Common myeloid progenitor, CD34-positive (primary cell): ENCODE measurements at regions of chr11 and their contacts with region 1.

Region 1: GRCh38 chr11:2532704-2533586 is 88.1 kb downstream of the KCNQ1 start:
- DNase-seq: peak; percentile 94 to 96 (median 94)
- H3K4me3 ChIP-seq: peak overlapping the region in 4 of 7 experiments; percentile 43 to 59 (median 51)
- H3K27ac ChIP-seq: no peak overlapping the region
- H3K4me1 ChIP-seq: peaks cover 3 to 50% (median 40%) of the 10 kb centered on the region in 4 experiments
- H3K27me3 ChIP-seq: no peaks in the 10 kb centered on the region

Region 2: GRCh38 chr11:2428322-2428795 is 104.6 kb before region 1 on chr11:
- CTCF ChIA-PET with region 1: interaction called, 284 read pairs
- POLR2A ChIA-PET with region 1: interaction called, 5 read pairs
- DNase-seq: peak; percentile 70 to 84 (median 76)
- H3K4me3 ChIP-seq: no peak overlapping the region
- H3K27ac ChIP-seq: no peak overlapping the region
- H3K4me1 ChIP-seq: no peaks in the 10 kb centered on the region
- H3K27me3 ChIP-seq: no peaks in the 10 kb centered on the region

Region 3: GRCh38 chr11:2466869-2467698 is 65.9 kb before region 1 on chr11:
- CTCF ChIA-PET with region 1: interaction called, 21 read pairs
- POLR2A ChIA-PET with region 1: no interaction called
- DNase-seq: peak; percentile 54 to 83 (median 80)
- H3K4me3 ChIP-seq: peak overlapping the region in 1 of 7 experiments; percentile 6
- H3K27ac ChIP-seq: no peak overlapping the region
- H3K4me1 ChIP-seq: peaks cover 0 to 28% (median 14%) of the 10 kb centered on the region in 4 experiments
- H3K27me3 ChIP-seq: peaks cover 0 to 3% (median 0%) of the 10 kb centered on the region in 5 experiments

Region 4: DNA sequence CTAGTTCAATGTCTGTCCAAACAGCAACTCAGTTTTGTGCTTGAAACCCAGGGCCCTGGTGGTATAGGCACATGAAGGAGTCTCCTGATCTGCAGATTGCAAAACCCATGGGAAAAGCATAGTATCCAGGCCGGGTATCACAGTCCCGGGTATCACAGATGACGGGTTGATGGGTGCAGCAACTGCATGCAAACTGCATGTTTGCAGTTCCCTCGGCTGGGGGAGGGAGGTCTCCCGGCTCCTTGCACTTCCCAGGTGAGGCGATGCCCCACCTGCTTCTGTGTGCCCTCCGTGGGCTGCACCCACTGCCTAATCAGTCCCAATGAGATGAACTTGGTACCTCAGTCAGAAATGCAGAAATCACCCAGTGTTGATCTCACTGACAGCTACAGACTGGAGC is 34.2 kb before region 1 on chr11:
- CTCF ChIA-PET with region 1: no interaction called
- POLR2A ChIA-PET with region 1: no interaction called
- DNase-seq: no peak
- H3K4me3 ChIP-seq: no peak overlapping the region
- H3K27ac ChIP-seq: no peak overlapping the region
- H3K4me1 ChIP-seq: no peaks in the 10 kb centered on the region
- H3K27me3 ChIP-seq: no peaks in the 10 kb centered on the region

Region 5: GRCh38 chr11:2885676-2886081 is 352.7 kb after region 1 on chr11 and contains the start of gene CDKN1C:
- CTCF ChIA-PET with region 1: interaction called, 462 read pairs
- POLR2A ChIA-PET with region 1: interaction called, 30 read pairs
- DNase-seq: peak; percentile 79 to 93 (median 91)
- H3K4me3 ChIP-seq: peak within 1 kb of the TSS; percentile 56 to 79 (median 70)
- H3K27ac ChIP-seq: no peak within 1 kb of the TSS
- H3K4me1 ChIP-seq: peaks cover 0 to 45% (median 34%) of the 10 kb centered on the region in 4 experiments
- H3K27me3 ChIP-seq: no peaks in the 10 kb centered on the region

Region 6: DNA sequence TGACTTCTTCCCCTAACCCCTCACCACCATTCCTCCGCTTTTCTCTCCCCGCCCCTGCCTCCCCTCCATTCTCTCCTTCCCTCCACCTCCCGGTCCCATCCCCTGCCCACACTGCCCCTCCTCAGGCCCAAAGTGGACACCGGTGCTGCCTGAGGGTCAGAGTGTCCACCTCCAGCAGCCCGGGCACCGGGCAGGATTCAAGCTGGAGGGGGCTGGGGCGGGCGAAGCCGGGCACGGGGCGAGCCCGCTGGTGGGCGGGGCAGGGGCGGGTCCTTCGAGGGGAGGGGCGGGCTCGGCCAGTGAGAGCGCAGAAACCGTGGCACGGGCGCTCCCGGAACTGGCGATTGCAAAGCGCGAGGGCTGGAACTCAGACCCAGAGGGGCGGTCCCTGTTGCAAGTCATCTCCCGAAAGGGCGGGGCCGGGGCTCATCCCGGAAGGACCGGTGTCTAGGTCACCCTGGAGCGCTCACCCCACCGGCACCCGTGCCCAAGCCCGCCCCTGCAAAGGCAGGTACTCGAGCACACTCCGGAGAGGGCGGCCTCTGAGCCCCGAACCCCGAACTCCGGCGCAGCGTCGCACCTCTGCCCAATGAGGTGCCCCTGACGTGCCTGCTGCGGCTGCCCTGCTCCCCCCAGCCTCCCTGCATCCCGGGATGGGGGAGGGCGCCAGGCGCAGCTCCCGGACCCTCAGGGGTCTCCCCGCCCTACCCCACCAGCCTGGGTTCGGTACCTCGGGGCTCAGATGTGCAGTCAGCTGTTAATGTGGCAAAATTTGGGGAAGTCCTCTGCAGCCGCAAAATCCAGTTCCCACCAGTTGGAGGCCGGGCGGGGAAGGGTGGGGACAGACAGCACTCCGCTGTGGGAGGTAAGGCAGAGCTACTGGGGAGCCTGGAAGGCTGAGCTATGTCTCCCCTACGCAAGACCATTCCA is 369.2 kb after region 1 on chr11:
- CTCF ChIA-PET with region 1: interaction called, 14 read pairs
- POLR2A ChIA-PET with region 1: no interaction called
- DNase-seq: peak; percentile 67 to 88 (median 86)
- H3K4me3 ChIP-seq: peak overlapping the region in 6 of 7 experiments; percentile 39 to 75 (median 60)
- H3K27ac ChIP-seq: peak overlapping the region in 1 of 2 experiments; percentile 73
- H3K4me1 ChIP-seq: peaks cover 0 to 58% (median 43%) of the 10 kb centered on the region in 4 experiments
- H3K27me3 ChIP-seq: no peaks in the 10 kb centered on the region

Region 7: GRCh38 chr11:3091791-3092602 is 559.1 kb after region 1 on chr11:
- CTCF ChIA-PET with region 1: interaction called, 12 read pairs
- POLR2A ChIA-PET with region 1: no interaction called
- DNase-seq: peak; percentile 43 to 54 (median 45)
- H3K4me3 ChIP-seq: no peak overlapping the region
- H3K27ac ChIP-seq: no peak overlapping the region
- H3K4me1 ChIP-seq: peaks cover 0 to 15% (median 6%) of the 10 kb centered on the region in 4 experiments
- H3K27me3 ChIP-seq: no peaks in the 10 kb centered on the region